Posterior cingulate gyrus (tissue), 11 donors: ENCODE measurements at regions of chr10 and their contacts with region 1.

Region 1: DNA sequence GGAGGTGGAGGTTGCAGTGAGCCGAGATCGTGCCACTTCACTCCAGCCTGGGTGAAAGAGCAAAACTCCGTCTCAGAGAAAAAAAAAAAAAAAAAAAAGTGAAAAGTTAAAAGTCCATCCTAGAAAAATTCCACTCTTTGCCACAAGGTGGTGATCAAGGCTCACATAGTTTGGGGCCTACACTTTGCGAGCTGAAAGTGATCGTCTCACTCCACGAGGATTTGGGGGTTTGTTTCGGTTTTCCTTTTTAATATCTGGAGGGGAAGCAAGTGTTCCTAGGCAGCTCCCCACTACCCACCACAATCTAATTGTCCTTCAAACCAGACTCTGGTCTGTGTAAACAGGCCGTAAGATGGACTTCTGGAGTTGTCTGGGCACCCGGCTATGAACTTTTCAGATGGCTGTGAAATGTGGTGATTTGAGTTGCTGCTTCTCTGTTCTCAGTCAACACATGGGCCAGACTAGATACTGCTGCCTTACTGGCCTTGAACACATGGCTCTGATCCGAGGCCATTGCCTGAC is 27.1 kb downstream of the PRLHR start:
- DNase-seq: peak in 2 of 10 donors; percentile 31 to 38

Region 2: GRCh38 chr10:118720685-118721538 is 152.5 kb after region 1 on chr10:
- intact Hi-C with region 1: loop called (anchors 1 kb)
- DNase-seq: peak in 4 of 10 donors; percentile 21 to 58 (median 39)

Region 3: DNA sequence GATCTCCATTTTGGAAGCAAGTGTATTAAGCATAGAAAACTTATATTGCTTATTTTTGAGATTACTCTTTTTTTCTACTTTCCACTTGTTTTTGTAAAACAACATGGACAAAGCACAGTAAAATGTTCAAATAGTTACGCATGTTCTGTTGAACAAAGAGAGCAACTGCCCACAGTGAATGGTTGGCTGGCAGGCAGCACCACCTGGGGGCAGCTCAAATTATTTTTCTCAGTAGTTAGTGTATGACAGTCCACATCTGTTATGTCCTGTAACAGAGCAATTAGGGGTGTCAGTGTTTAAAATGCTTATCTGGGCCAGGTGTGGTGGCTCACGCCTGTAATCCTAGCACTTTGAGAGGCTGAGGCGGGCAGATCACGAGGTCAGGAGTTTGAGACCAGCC is 232.5 kb after region 1 on chr10:
- intact Hi-C with region 1: loop called (anchors 2 kb)
- DNase-seq: peak in 3 of 10 donors; percentile 19 to 38 (median 20)